Heart left ventricle (tissue), 16 donors: ENCODE measurements at regions of chr2 and their contacts with region 1.

Region 1: GRCh38 chr2:203484266-203485112 is 50.6 kb downstream of the RAPH1 start:
- DNase-seq: peak in 2 of 5 donors; percentile 29 to 32
- ATAC-seq: peak; percentile 63 to 91 (median 81)
- H3K4me3 ChIP-seq: no peak overlapping the region
- H3K27ac ChIP-seq: no peak overlapping the region
- H3K4me1 ChIP-seq: peaks cover 0 to 11% (median 0%) of the 10 kb centered on the region in 12 donors
- H3K27me3 ChIP-seq: no peaks in the 10 kb centered on the region
- CTCF ChIP-seq: peak; percentile 48 to 73 (median 63)
- POLR2A ChIP-seq: no peak

Region 2: DNA sequence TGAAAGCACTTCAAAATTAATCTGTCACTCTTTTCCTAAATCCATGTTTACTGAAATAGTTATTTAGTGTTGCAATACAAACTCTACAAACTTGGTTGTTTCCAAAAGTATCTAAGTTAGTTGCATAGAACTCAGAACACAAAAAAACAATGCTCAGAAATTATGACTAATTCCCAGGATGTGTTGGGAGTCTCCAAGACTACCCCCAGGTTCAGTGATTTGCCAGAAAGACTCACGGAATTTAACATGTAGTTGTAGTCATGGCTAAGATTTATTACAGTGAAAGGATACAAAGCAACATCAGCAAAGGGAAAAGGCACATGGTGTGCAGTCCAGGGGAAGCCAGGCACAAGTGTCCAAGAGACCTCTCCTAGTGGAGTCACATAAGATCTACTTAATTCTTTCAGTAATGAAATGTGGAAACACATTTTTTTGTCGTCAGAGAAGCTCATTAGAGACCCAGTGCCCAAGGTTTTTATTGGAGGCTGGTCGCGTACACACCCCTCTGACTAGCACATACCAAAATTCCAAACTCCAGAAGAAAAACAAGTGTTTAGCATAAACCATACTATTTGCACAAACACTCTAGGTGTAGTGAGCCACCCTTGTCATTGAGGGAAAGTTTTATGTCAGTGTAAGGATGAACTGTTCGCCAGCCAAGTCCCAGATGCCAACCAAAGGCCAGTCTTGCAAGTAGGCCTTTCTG is 289.0 kb before region 1 on chr2:
- intact Hi-C with region 1: no loop called
- DNase-seq: no peak
- ATAC-seq: no peak
- H3K4me3 ChIP-seq: no peak overlapping the region
- H3K27ac ChIP-seq: no peak overlapping the region
- H3K4me1 ChIP-seq: no peaks in the 10 kb centered on the region
- H3K27me3 ChIP-seq: no peaks in the 10 kb centered on the region
- CTCF ChIP-seq: no peak
- POLR2A ChIP-seq: no peak

Region 3: GRCh38 chr2:203650860-203651613 is 166.5 kb after region 1 on chr2:
- intact Hi-C with region 1: loop called in 9 of 10 experiments (anchors 2 to 10 kb)
- DNase-seq: peak in 1 of 5 donors; percentile 23
- ATAC-seq: peak; percentile 71 to 86 (median 80)
- H3K4me3 ChIP-seq: no peak overlapping the region
- H3K27ac ChIP-seq: peak overlapping the region in 11 of 12 donors; percentile 30 to 75 (median 56)
- H3K4me1 ChIP-seq: peaks cover 0 to 37% (median 23%) of the 10 kb centered on the region in 12 donors
- H3K27me3 ChIP-seq: no peaks in the 10 kb centered on the region
- CTCF ChIP-seq: peak in 10 of 12 donors; percentile 22 to 59 (median 38)
- POLR2A ChIP-seq: no peak

Region 4: DNA sequence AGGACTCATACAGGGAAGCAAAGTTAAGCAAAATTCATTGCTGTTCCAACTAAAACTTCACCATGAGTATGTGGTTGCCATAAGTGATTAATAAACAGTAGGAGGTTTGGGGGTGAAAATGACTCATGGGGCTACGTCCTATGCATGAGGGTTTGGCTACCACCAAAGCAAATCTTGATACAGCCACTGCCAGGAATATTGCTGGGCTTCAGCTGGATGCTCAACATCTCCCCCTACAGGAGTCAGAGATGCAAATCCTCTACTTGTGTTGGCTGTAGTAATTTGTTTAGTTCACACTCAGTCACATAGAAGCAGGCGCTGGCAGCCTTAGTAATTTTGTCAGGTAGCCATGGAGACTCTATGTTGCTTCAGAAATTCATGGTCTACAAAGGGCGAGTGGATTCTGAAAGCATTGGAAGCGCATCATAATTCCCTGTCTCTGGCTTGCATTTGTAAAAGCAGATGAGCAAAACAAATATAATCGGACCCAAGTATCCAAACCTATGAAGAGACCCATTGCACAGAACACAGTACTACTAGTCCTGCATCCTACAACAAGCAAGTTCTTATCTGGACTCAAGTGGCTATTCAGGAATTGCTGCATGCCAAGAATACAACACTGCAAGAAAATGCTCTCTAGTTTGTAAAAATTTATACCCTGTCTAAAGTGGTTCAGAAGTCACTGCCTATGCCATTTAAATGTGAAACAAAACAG is 297.9 kb after region 1 on chr2:
- intact Hi-C with region 1: loop called in 1 of 10 experiments (anchors 10 kb)
- DNase-seq: peak in 4 of 5 donors; percentile 31 to 55 (median 40)
- ATAC-seq: peak in 3 of 4 donors; percentile 67 to 80 (median 69)
- H3K4me3 ChIP-seq: no peak overlapping the region
- H3K27ac ChIP-seq: peak overlapping the region in 4 of 12 donors; percentile 1 to 44 (median 14)
- H3K4me1 ChIP-seq: peaks cover 0 to 47% (median 21%) of the 10 kb centered on the region in 12 donors
- H3K27me3 ChIP-seq: no peaks in the 10 kb centered on the region
- CTCF ChIP-seq: peak; percentile 55 to 81 (median 70)
- POLR2A ChIP-seq: no peak